Activated B cell treated with CpG ODN at 0.5 μM for 24 hours (primary cell): ENCODE measurements at regions of chr1 and their contacts with region 1.

Region 1: DNA sequence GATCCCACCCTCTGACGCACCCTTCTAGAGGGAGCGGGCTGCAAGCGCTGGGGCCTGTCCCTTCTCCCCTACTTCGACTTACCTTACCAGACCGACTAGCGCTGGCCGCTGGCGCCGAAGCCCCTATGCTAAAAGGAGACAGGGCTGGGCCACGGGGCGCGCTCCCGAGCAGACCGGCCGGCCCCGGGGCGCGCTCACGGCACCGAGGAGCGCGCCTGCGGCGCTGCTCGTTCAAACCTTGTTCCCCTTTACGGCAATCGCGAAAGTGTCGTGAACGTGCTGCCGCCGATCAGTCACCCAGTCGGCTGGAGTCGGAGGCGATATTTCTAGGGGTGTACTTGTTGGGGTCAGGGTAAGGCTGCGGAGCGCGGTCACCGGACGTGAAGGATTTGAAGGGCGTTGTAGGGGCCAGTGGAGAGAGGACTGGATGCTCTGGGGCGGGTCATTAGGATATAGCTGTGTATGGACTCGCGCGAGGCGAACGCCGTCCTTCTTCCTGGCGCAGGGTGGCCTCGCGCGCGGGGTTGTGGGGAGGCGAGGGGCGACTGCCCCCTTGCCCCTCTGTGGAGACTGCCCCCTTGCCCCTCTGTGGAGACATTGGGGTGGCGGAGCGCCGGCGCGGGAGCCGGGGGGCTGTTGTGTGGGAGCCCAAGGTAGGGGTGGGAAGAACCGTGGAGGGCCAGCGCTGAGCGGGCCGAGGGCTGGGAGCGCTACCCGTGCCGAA is at the starts of genes CEPT1 and DRAM2:
- DNase-seq: peak; percentile 90
- ATAC-seq: peak; percentile 78
- H3K4me3 Mint-ChIP-seq: peak within 1 kb of the TSS; percentile 100
- H3K27ac Mint-ChIP-seq: peak within 1 kb of the TSS; percentile 99
- H3K4me1 Mint-ChIP-seq: peaks cover 74% of the 10 kb centered on the region
- H3K27me3 Mint-ChIP-seq: no peaks in the 10 kb centered on the region
- CTCF ChIP-seq: no peak
- total RNA-seq, gene CEPT1: 74.4 and 87.0 TPM in 2 replicates
- total RNA-seq, gene DRAM2: 61.8 and 77.6 TPM in 2 replicates

Region 2: DNA sequence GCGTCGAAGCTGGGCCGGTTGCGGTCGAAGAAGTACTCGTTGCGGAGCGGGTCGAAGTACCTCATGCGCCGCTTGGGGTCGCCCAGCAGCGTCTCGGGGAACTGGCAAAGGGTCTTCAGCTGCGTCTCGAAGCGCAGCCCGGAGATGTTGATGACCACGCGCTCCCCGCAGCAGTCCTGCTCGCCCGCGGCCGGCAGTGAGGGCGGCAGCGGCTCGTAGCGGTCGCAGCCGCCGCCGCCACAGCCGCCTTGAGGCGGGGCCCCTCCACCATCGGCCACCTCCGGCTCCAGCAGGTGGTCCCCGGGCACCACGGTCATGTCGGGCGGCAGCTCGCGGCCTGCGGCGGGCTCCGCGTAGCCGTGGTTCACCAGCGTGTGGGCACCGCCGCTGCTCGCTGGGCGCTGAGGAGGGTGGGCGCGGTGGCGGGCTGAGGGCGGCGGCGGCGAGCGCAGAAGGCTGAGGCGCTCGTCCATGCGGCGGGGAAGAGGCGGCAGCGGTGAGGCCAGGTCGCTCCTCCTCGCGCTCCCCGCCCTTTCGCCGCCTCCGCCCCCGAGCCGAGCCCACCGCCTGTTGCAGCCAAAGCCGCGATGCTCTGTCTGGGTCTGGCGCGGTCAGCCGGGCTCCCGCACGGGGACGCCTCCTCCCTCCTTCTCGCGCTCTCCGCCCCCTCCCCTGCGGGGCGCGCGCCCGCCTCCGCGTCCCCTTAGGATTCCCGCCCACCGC is 465.6 kb before region 1 on chr1 and contains the start of gene KCNA3:
- CTCF ChIA-PET with region 1: no interaction called
- POLR2A ChIA-PET with region 1: no interaction called
- intact Hi-C with region 1: loop called (anchors 10 kb)
- DNase-seq: peak; percentile 68
- ATAC-seq: peak; percentile 62
- H3K4me3 Mint-ChIP-seq: peak within 1 kb of the TSS; percentile 90
- H3K27ac Mint-ChIP-seq: peak within 1 kb of the TSS; percentile 80
- H3K4me1 Mint-ChIP-seq: peaks cover 60% of the 10 kb centered on the region
- H3K27me3 Mint-ChIP-seq: no peaks in the 10 kb centered on the region
- CTCF ChIP-seq: no peak
- total RNA-seq, gene KCNA3: 15.0 and 20.0 TPM in 2 replicates

Region 3: GRCh38 chr1:111030590-111030989 is 109.5 kb before region 1 on chr1:
- CTCF ChIA-PET with region 1: interaction called, 8 read pairs
- POLR2A ChIA-PET with region 1: interaction called, 9 read pairs
- intact Hi-C with region 1: loop called (anchors 1 kb)
- DNase-seq: no peak
- ATAC-seq: peak; percentile 70
- H3K4me3 Mint-ChIP-seq: no peak overlapping the region
- H3K27ac Mint-ChIP-seq: no peak overlapping the region
- H3K4me1 Mint-ChIP-seq: peaks cover 8% of the 10 kb centered on the region
- H3K27me3 Mint-ChIP-seq: no peaks in the 10 kb centered on the region
- CTCF ChIP-seq: peak; percentile 53

Region 4: DNA sequence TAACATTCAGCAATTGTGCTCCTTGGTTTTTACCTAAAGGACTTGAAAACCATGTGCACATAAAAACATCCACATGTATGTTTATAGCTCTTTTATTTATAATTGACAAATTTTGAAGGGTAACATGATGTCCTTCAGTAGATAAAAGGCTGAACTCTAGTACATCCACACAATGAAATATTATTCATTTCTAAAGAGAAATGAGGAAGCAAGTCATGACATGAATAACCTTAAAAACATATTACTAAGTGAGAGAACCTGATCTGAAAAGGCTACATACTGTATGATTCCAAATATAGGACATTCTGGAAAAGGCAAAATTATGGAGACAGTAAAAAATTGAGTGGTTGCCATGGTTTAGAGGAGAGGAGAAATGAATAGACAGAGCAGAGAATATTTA is 50.5 kb before region 1 on chr1:
- CTCF ChIA-PET with region 1: no interaction called
- POLR2A ChIA-PET with region 1: no interaction called
- intact Hi-C with region 1: no loop called
- DNase-seq: no peak
- ATAC-seq: no peak
- H3K4me3 Mint-ChIP-seq: no peak overlapping the region
- H3K27ac Mint-ChIP-seq: no peak overlapping the region
- H3K4me1 Mint-ChIP-seq: peaks cover 10% of the 10 kb centered on the region
- H3K27me3 Mint-ChIP-seq: no peaks in the 10 kb centered on the region
- CTCF ChIP-seq: no peak

Region 5: GRCh38 chr1:111176678-111177077 is 36.6 kb after region 1 on chr1:
- CTCF ChIA-PET with region 1: no interaction called
- POLR2A ChIA-PET with region 1: interaction called, 5 read pairs
- intact Hi-C with region 1: loop called (anchors 5 kb)
- DNase-seq: no peak
- ATAC-seq: peak; percentile 64
- H3K4me3 Mint-ChIP-seq: no peak overlapping the region
- H3K27ac Mint-ChIP-seq: peak overlapping the region; percentile 69
- H3K4me1 Mint-ChIP-seq: peaks cover 64% of the 10 kb centered on the region
- H3K27me3 Mint-ChIP-seq: no peaks in the 10 kb centered on the region
- CTCF ChIP-seq: no peak

Region 6: GRCh38 chr1:111203681-111204200 is 63.6 kb after region 1 on chr1:
- CTCF ChIA-PET with region 1: no interaction called
- POLR2A ChIA-PET with region 1: interaction called, 31 read pairs
- intact Hi-C with region 1: loop called (anchors 1 kb)
- DNase-seq: peak; percentile 80
- ATAC-seq: peak; percentile 59
- H3K4me3 Mint-ChIP-seq: peak overlapping the region; percentile 89
- H3K27ac Mint-ChIP-seq: peak overlapping the region; percentile 93
- H3K4me1 Mint-ChIP-seq: peaks cover 85% of the 10 kb centered on the region
- H3K27me3 Mint-ChIP-seq: no peaks in the 10 kb centered on the region
- CTCF ChIP-seq: no peak

Region 7: DNA sequence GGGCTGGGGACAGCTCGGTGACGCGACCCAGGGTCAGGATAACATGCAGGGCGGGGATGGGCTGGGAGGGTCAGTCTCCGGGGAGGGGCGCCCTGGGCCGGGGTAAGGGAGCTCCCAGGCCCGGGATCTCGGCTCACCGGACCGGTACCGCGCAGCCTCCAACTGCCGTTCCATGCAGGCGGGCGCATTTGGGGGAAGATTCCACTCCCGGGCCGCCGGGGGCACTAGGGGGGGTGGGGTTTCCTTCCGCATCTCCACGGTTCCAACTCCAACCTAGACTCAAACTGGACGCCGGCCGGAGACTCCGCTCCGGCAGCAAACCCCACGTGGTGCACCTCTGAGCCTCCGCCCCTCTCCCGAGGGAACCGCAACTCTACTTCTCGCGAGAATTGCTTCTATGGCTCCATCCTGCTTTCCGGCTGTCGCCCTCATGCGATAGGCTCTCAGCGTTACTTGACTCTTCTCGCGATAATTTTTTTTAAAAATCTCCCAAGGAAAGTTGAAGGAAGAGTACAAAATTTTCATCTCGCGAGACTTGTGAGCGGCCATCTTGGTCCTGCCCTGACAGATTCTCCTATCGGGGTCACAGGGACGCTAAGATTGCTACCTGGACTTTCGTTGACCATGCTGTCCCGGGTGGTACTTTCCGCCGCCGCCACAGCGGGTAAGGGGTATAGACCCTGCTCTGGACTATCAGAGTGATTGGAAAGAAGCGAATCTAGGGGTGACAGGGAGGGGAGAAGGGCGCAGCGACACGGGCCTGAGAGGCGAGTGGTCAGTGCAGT is 309.0 kb after region 1 on chr1 and contains the starts of genes ATP5PB and WDR77:
- CTCF ChIA-PET with region 1: no interaction called
- POLR2A ChIA-PET with region 1: interaction called, 8 read pairs
- intact Hi-C with region 1: loop called (anchors 5 kb)
- DNase-seq: peak; percentile 77
- ATAC-seq: peak; percentile 96
- H3K4me3 Mint-ChIP-seq: peak within 1 kb of the TSS; percentile 100
- H3K27ac Mint-ChIP-seq: peak within 1 kb of the TSS; percentile 98
- H3K4me1 Mint-ChIP-seq: peaks cover 71% of the 10 kb centered on the region
- H3K27me3 Mint-ChIP-seq: no peaks in the 10 kb centered on the region
- CTCF ChIP-seq: no peak
- total RNA-seq, gene ATP5PB: 220 and 229 TPM in 2 replicates
- total RNA-seq, gene WDR77: 55.8 and 63.3 TPM in 2 replicates